RWPE1 (cell line): ENCODE measurements at regions of chrX and their contacts with region 1.

Region 1: DNA sequence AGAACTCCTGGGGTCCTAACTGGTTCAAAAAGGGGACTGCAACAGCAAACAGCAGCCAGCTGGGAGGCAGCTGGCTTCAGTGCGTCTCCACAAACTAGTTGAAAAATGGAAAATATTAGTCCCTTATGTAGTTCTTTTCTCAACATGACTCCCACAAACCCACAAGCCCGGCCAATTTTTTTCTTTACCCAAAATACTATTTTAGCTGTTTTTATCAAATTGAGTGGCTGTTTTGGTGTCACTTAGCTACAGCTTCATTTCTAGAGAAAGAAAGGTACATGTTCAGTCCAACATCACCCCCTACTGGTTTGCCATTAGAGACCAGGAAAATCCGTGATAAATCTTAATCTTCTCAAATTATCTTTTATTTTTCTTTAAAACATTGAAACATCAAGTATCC is 97.2 kb downstream of the GUCY2F start:
- DNase-seq: no peak
- H3K27ac ChIP-seq: no peak overlapping the region
- CTCF ChIP-seq: no peak

Region 2: GRCh38 chrX:108699368-108699767 is 685.3 kb before region 1 on chrX:
- CTCF ChIA-PET with region 1: interaction called, 15 read pairs
- POLR2A ChIA-PET with region 1: no interaction called
- DNase-seq: peak; percentile 3
- H3K27ac ChIP-seq: no peak overlapping the region
- CTCF ChIP-seq: no peak

Region 3: GRCh38 chrX:109398833-109399232 is 14.1 kb after region 1 on chrX:
- CTCF ChIA-PET with region 1: no interaction called
- POLR2A ChIA-PET with region 1: no interaction called
- DNase-seq: no peak
- H3K27ac ChIP-seq: no peak overlapping the region
- CTCF ChIP-seq: no peak

Region 4: DNA sequence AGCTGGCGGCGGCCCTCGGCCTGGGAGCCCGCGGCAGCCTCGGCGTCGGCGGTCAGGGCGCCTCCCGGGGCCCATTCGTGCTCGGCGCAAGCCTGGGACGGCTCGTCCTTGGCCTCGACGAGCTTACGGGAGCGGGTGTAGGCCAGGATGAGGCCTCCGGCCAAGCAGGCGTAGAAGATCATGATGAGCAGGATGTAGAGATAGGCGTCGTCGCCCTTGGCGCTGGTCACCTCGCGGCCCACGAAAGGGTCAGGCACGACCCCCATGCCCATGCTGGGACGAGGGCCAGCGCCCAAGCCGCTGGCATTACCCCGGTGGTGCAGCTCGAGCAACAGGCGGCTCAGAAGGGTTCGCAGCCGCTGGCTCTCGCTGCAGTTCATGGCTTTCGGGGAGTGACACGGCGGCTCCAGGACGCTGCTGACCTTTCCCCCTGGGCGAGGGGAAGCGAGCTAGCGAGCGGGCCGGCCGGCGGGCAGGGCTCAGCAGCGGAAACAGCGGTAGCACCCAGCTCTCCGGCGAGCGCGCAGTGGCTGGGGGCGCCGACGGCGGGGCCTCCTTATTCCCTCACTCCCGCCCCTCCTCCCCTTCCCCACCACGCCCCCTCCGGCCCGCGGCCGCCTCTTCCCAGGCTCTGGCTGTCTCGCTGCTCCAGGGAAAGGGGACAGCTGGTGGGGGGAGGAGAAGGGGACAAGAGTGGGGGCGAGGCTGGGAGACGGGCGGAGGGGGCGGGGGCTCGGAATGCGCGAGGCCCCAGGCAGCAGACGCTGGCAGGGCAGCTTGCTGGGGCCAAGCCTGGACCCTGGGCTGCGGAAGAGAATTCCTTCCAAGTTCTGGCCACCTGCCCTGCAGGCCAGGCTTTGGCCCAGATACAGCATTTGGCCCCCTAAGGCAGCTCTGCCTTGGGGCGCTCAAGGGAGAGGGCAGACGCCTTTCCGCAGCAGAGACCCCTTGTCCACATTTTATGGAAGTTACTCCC is 240.2 kb after region 1 on chrX and contains the start of gene KCNE5:
- CTCF ChIA-PET with region 1: no interaction called
- POLR2A ChIA-PET with region 1: no interaction called
- DNase-seq: no peak
- H3K27ac ChIP-seq: no peak within 1 kb of the TSS
- CTCF ChIP-seq: no peak